ENCODE measurements at regions of chr6 and their contacts with region 1.

Region 1: GRCh38 chr6:168060521-168060931 is 18.5 kb downstream of the FRMD1 start:
- DNase-seq: peak; percentile 30 to 80 (median 66)
- H3K4me3 ChIP-seq: no peak overlapping the region
- H3K27ac ChIP-seq: no peak overlapping the region
- H3K4me1 ChIP-seq: no peaks in the 10 kb centered on the region
- H3K27me3 ChIP-seq: no peaks in the 10 kb centered on the region
- CTCF ChIP-seq: peak in 2 of 3 donors; percentile 20 to 25
- EP300 ChIP-seq: no peak
- POLR2A ChIP-seq: no peak

Region 2: DNA sequence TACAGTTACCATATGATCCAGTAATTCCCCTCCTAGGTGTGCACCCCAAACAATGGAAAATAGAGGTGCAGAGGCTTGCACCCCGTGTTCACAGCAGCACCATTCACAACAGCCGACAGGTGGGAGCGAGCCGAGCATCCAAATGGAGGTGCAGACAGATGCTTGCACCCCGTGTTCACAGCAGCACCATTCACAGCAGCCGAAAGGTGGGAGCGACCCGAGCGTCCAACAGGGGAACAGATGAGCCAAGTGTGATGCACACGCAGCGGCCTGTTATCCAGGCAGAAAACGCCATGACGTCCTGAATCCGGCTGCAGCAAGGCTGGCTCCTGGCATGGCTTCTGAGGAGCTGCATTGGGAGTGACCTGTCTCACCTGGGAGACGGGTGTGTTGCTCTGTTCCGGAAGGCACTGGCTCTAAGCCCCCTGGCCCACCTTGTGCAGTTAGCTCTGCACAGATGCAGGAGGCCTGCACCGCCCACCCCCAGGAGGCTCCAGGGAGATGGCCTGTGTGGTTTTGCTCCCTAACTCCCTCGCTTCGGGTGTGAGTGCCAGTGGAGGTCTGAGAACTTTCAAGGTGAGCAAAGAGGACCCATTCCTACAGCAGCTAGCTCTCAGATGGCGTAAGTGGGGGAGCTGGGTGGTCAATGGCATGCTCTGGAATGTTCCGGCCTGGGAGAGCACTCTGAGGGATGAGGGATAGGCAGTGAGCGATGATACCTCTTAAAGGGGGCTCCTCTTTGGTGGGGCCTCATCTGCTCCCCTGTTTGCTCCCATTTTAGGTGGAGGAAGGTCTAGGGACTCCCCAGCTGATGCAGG is 66.2 kb after region 1 on chr6:
- intact Hi-C with region 1: loop called in 1 of 4 experiments (anchors 5 kb)
- DNase-seq: no peak
- H3K4me3 ChIP-seq: no peak overlapping the region
- H3K27ac ChIP-seq: no peak overlapping the region
- H3K4me1 ChIP-seq: no peaks in the 10 kb centered on the region
- H3K27me3 ChIP-seq: no peaks in the 10 kb centered on the region
- CTCF ChIP-seq: no peak
- EP300 ChIP-seq: no peak
- POLR2A ChIP-seq: no peak

Region 3: DNA sequence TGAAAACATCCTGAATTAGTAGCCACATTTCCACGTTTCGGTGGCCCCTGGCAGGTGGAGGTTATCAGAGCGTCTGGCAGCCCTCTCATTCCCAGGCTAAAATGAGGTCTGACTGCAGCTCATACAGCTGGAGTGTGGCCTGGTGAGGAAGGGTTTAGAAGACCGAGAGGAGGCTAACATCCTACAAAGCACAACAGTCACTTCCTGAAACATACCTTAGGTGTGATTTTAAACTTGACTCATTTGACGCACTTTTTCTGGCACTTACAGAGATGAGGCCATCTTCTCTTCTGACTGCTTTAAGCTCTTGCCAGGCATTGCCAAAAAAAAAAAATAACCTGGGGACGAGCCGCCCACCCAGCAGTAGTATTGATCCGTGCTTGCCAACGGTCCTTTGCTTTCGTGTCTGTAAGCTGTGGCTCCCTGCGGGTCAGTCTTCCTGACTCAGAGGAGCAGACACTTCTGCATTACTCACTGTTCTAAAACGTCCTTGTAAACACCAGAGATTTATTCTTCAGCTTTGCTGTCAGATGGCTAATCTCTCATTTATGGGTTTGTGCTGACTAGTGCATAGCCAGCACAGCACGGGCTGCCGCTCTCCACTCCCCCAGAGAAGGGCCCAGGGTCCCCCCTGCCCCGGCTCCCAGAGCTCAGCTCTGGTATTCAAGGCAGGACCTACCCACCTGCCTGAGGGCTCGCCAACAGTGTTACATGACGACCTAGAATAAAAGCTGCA is 96.9 kb after region 1 on chr6:
- intact Hi-C with region 1: no loop called
- DNase-seq: no peak
- H3K4me3 ChIP-seq: no peak overlapping the region
- H3K27ac ChIP-seq: no peak overlapping the region
- H3K4me1 ChIP-seq: peaks cover 2% of the 10 kb centered on the region
- H3K27me3 ChIP-seq: no peaks in the 10 kb centered on the region
- CTCF ChIP-seq: no peak
- EP300 ChIP-seq: no peak
- POLR2A ChIP-seq: no peak

Region 4: GRCh38 chr6:168355716-168356449 is 295.4 kb after region 1 on chr6:
- intact Hi-C with region 1: loop called in 1 of 4 experiments (anchors 10 kb)
- DNase-seq: peak in 3 of 5 donors; percentile 50 to 79 (median 68)
- H3K4me3 ChIP-seq: no peak overlapping the region
- H3K27ac ChIP-seq: no peak overlapping the region
- H3K4me1 ChIP-seq: no peaks in the 10 kb centered on the region
- H3K27me3 ChIP-seq: no peaks in the 10 kb centered on the region
- CTCF ChIP-seq: peak in 1 of 3 donors; percentile 44
- EP300 ChIP-seq: no peak
- POLR2A ChIP-seq: no peak

Measured in ovary (tissue), 10 donors.